ENCODE measurements at regions of chr9 and their contacts with region 1.

Region 1: DNA sequence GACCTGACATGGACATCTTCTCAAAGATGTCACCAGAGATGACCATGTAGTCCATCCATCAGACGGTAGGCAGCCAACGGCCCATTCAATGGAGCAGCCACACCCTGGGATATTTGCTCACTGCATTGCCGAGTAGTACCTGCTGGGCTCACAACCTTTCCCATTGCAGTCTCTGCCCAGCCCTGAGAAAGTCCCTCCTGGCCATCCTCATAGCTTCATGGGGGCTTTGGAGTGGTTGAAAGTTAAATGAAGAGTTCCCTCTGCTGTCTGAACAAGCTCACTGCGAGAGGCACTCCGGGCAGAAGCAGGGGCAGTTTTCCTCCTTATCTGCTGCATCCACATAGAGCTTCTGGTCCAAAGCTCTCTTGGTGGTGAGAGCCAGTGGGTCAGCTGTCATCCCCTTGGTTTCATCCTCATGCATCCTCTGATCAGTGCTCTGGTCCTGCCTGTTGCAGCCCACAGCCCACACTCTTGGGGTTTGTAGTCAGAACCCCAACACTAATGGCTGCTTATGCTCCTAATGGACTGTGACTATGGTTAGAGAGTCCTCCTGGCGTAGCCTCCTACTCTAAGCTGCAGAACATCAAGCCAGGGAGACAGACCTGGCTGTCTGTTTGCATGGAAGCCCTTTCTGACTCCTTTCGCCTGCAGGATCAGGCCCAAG is 23.4 kb downstream of the TNFSF8 start:
- DNase-seq: peak in 4 of 5 donors; percentile 6 to 55 (median 28)
- H3K4me3 ChIP-seq: peak overlapping the region; percentile 9
- H3K4me3 Mint-ChIP-seq: peak overlapping the region in 6 of 7 donors; percentile 23 to 83 (median 74)
- H3K27ac ChIP-seq: no peak overlapping the region
- H3K27ac Mint-ChIP-seq: peak overlapping the region; percentile 80 to 96 (median 92)
- H3K4me1 ChIP-seq: peaks cover 91% of the 10 kb centered on the region
- H3K4me1 Mint-ChIP-seq: peaks cover 0 to 58% (median 53%) of the 10 kb centered on the region in 3 donors
- H3K27me3 ChIP-seq: no peaks in the 10 kb centered on the region
- H3K27me3 Mint-ChIP-seq: no peaks in the 10 kb centered on the region

Region 2: GRCh38 chr9:114919611-114920010 is 12.6 kb after region 1 on chr9:
- CTCF ChIA-PET with region 1: interaction called, 18 read pairs
- POLR2A ChIA-PET with region 1: interaction called, 3 read pairs
- DNase-seq: no peak
- H3K4me3 ChIP-seq: no peak overlapping the region
- H3K4me3 Mint-ChIP-seq: peak overlapping the region in 5 of 7 donors; percentile 36 to 44 (median 39)
- H3K27ac ChIP-seq: no peak overlapping the region
- H3K27ac Mint-ChIP-seq: peak overlapping the region; percentile 12 to 90 (median 82)
- H3K4me1 ChIP-seq: peaks cover 57% of the 10 kb centered on the region
- H3K4me1 Mint-ChIP-seq: peaks cover 60 to 99% (median 77%) of the 10 kb centered on the region in 3 donors
- H3K27me3 ChIP-seq: no peaks in the 10 kb centered on the region
- H3K27me3 Mint-ChIP-seq: no peaks in the 10 kb centered on the region

Region 3: DNA sequence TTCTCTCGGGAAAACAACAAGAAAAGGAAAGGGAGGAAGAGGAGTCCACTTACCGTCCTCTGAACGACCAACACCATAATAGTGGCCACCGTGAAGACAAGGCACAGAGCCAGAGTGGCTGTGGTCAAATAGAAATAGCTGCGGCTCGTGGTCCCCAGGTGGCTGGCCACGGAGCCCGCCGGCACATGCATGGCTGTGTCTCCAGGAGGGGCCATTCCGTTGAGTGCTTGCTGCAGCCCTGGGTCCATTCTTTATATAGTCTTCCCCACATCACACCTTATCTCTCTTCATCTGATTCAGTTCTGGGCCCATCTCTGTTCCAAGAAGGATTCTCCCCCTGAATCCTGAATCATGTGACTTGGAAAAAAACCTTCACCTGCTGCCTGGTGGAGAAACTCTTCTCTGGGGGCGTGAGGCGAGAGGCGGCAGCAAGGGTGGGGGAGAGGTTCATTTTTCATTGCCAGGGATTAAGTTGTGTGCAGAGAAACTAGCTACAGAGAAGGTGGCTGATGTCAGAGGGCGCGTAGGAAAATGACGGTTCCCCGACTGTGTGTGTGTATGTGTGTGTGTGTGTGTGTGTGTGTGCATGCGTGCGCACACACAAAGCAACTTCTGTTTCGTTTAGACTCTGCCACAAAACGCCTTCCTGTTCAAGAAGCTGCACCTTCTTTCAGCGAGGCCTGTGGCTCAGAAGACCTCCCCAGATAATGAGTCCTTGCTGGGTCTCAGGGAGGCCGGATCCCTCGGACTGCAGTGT is 23.2 kb after region 1 on chr9 and contains the start of gene TNFSF8:
- CTCF ChIA-PET with region 1: interaction called, 66 read pairs
- POLR2A ChIA-PET with region 1: interaction called, 15 read pairs
- DNase-seq: peak; percentile 54 to 91 (median 79)
- H3K4me3 ChIP-seq: peak within 1 kb of the TSS; percentile 89
- H3K4me3 Mint-ChIP-seq: peak within 1 kb of the TSS; percentile 89 to 98 (median 97)
- H3K27ac ChIP-seq: peak within 1 kb of the TSS; percentile 60
- H3K27ac Mint-ChIP-seq: peak within 1 kb of the TSS; percentile 86 to 99 (median 98)
- H3K4me1 ChIP-seq: peaks cover 36% of the 10 kb centered on the region
- H3K4me1 Mint-ChIP-seq: peaks cover 38 to 56% (median 51%) of the 10 kb centered on the region in 3 donors
- H3K27me3 ChIP-seq: no peaks in the 10 kb centered on the region
- H3K27me3 Mint-ChIP-seq: peaks cover 0 to 3% of the 10 kb centered on the region in 2 donors
- total RNA-seq, gene TNFSF8: 72.6 to 73.2 TPM

Region 4: GRCh38 chr9:114945616-114946412 is 38.8 kb after region 1 on chr9:
- CTCF ChIA-PET with region 1: no interaction called
- POLR2A ChIA-PET with region 1: no interaction called
- DNase-seq: no peak
- H3K4me3 ChIP-seq: no peak overlapping the region
- H3K4me3 Mint-ChIP-seq: no peak overlapping the region
- H3K27ac ChIP-seq: no peak overlapping the region
- H3K27ac Mint-ChIP-seq: no peak overlapping the region
- H3K4me1 ChIP-seq: no peaks in the 10 kb centered on the region
- H3K4me1 Mint-ChIP-seq: peaks cover 9 to 13% (median 9%) of the 10 kb centered on the region in 3 donors
- H3K27me3 ChIP-seq: no peaks in the 10 kb centered on the region
- H3K27me3 Mint-ChIP-seq: peaks cover 0 to 2% of the 10 kb centered on the region in 2 donors

Region 5: DNA sequence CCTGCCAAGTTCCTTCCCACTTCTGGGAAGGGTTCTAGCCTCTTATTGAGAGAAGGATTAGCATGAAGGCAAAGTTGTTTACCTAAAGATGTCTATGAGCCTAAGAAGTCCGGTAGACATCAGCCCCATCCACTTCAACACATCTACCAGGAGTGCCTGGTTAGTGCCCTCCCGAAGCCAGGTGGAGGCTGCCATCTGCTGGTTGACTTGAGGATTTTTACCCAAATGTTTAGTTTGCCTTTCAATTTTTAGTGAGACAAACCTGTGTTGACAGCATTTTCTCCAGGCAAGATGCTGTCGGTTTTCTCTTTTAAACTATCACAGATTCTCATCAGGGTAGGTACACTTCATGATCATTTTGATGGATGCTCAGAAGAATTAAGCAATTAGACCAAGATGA is 107.0 kb after region 1 on chr9:
- CTCF ChIA-PET with region 1: interaction called, 13 read pairs
- POLR2A ChIA-PET with region 1: no interaction called
- DNase-seq: peak; percentile 58 to 85 (median 71)
- H3K4me3 ChIP-seq: no peak overlapping the region
- H3K4me3 Mint-ChIP-seq: no peak overlapping the region
- H3K27ac ChIP-seq: no peak overlapping the region
- H3K27ac Mint-ChIP-seq: peak overlapping the region in 1 of 8 donors; percentile 13
- H3K4me1 ChIP-seq: no peaks in the 10 kb centered on the region
- H3K4me1 Mint-ChIP-seq: peaks cover 1 to 23% (median 8%) of the 10 kb centered on the region in 3 donors
- H3K27me3 ChIP-seq: no peaks in the 10 kb centered on the region
- H3K27me3 Mint-ChIP-seq: peaks cover 0 to 8% of the 10 kb centered on the region in 2 donors